ENCODE measurements at regions of chr9 and their contacts with region 1.

Region 1: DNA sequence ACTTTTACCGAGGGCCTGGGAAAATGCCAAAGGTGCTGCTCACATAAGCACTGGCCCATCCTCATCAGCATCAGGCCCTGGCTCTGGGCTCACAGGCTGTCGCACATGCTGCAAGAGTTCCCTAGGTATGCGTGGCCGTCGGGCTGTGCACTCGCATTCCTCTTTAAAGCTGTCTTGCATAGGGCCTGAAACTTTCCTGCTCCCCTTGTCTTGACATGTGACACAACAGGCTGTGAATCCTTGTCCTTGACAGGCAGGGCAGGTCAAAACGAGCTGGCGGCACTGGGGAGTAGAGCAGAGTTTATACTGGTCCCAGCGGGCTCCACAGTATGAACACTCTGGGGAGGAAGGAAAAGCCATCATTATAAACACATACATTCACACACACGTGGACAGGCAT is 30.7 kb downstream of the TSTD2 start:
- DNase-seq: no peak
- H3K4me3 ChIP-seq: no peak overlapping the region
- H3K27ac ChIP-seq: no peak overlapping the region
- H3K4me1 ChIP-seq: no peaks in the 10 kb centered on the region
- H3K27me3 ChIP-seq: no peaks in the 10 kb centered on the region

Region 2: DNA sequence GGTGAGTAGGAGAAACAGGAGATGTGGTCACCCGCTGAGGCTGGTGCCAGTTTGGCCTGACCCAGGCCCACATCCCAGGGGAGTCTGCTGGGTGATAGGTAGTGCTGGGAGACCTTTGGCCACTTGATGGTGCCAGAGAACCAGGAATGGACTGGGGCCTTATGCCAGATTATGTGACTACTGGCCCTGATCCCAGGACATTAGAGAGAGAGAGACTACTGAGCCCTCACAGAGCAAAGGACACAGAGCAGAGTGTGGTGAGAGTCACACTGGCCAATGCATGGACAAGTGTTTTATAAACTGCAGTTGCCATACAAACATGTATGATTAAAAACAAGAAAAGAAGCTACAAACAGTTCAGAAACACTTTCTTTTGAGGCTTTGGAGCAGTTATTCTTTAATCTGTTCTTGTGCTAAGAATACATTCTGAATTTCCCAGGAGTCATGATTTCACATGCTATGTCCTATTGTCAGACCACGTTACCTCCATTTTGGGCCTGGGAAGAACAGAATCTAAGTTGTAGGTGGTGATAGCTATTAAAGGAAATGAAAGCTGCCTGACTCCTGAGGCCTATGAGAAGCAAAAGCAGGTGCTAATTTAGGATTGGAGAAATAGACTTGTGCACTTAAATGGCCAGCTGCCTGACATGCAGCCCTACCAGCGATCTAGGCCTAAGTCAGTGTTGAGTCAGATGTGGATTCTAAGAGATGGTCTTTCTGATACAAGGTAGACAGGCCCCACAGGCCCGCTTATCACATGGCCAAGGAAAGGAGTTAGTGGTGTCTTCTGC is 133.6 kb before region 1 on chr9:
- in situ Hi-C with region 1: loop called (anchors 10 kb)
- DNase-seq: peak; percentile 71
- H3K4me3 ChIP-seq: no peak overlapping the region
- H3K27ac ChIP-seq: no peak overlapping the region
- H3K4me1 ChIP-seq: no peaks in the 10 kb centered on the region
- H3K27me3 ChIP-seq: no peaks in the 10 kb centered on the region